CD8-positive, alpha-beta T cell (primary cell): ENCODE measurements at regions of chr4 and their contacts with region 1.

Region 1: DNA sequence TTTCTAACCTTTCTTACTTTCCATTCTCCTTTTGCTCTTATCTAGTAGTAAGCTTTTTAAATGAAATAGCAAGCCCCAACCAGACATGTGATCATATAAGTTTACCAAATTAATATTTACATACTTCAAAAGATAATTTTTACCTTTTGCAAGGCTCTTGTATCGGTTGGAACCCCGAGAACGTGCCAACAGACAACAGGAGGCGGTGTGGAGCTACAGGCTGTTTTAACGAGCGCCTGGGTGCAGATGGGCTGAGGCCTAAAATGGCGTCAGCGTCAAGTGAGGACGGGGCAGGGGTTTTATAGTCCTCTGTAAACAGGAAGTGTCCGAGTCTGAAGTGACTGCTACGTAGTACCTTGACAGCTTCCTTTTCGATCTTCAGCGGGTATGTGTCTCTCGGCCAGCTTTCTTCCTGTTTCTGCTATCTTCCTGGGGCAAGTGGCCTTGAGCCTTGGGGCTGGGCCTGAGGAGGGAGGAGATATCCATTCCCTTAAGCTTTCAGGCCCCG is 342.7 kb downstream of the GALNTL6 start:
- DNase-seq: no peak
- ATAC-seq: no peak
- H3K4me3 ChIP-seq: no peak overlapping the region
- H3K4me3 Mint-ChIP-seq: no peak overlapping the region
- H3K27ac ChIP-seq: no peak overlapping the region
- H3K27ac Mint-ChIP-seq: no peak overlapping the region
- H3K4me1 ChIP-seq: no peaks in the 10 kb centered on the region
- H3K4me1 Mint-ChIP-seq: no peaks in the 10 kb centered on the region
- H3K27me3 ChIP-seq: no peaks in the 10 kb centered on the region
- H3K27me3 Mint-ChIP-seq: no peaks in the 10 kb centered on the region
- CTCF ChIP-seq: no peak

Region 2: GRCh38 chr4:172083236-172083635 is 72.7 kb before region 1 on chr4:
- CTCF ChIA-PET with region 1: no interaction called
- POLR2A ChIA-PET with region 1: no interaction called
- intact Hi-C with region 1: loop called in 1 of 2 experiments (anchors 2 kb)
- DNase-seq: no peak
- ATAC-seq: no peak
- H3K4me3 ChIP-seq: no peak overlapping the region
- H3K4me3 Mint-ChIP-seq: no peak overlapping the region
- H3K27ac ChIP-seq: no peak overlapping the region
- H3K27ac Mint-ChIP-seq: no peak overlapping the region
- H3K4me1 ChIP-seq: no peaks in the 10 kb centered on the region
- H3K4me1 Mint-ChIP-seq: no peaks in the 10 kb centered on the region
- H3K27me3 ChIP-seq: no peaks in the 10 kb centered on the region
- H3K27me3 Mint-ChIP-seq: no peaks in the 10 kb centered on the region
- CTCF ChIP-seq: no peak

Region 3: GRCh38 chr4:172096786-172097185 is 59.1 kb before region 1 on chr4:
- CTCF ChIA-PET with region 1: no interaction called
- POLR2A ChIA-PET with region 1: no interaction called
- intact Hi-C with region 1: no loop called
- DNase-seq: no peak
- ATAC-seq: no peak
- H3K4me3 ChIP-seq: no peak overlapping the region
- H3K4me3 Mint-ChIP-seq: no peak overlapping the region
- H3K27ac ChIP-seq: no peak overlapping the region
- H3K27ac Mint-ChIP-seq: no peak overlapping the region
- H3K4me1 ChIP-seq: no peaks in the 10 kb centered on the region
- H3K4me1 Mint-ChIP-seq: no peaks in the 10 kb centered on the region
- H3K27me3 ChIP-seq: no peaks in the 10 kb centered on the region
- H3K27me3 Mint-ChIP-seq: no peaks in the 10 kb centered on the region
- CTCF ChIP-seq: no peak